ENCODE measurements at regions of chrX and their contacts with region 1.

Region 1: DNA sequence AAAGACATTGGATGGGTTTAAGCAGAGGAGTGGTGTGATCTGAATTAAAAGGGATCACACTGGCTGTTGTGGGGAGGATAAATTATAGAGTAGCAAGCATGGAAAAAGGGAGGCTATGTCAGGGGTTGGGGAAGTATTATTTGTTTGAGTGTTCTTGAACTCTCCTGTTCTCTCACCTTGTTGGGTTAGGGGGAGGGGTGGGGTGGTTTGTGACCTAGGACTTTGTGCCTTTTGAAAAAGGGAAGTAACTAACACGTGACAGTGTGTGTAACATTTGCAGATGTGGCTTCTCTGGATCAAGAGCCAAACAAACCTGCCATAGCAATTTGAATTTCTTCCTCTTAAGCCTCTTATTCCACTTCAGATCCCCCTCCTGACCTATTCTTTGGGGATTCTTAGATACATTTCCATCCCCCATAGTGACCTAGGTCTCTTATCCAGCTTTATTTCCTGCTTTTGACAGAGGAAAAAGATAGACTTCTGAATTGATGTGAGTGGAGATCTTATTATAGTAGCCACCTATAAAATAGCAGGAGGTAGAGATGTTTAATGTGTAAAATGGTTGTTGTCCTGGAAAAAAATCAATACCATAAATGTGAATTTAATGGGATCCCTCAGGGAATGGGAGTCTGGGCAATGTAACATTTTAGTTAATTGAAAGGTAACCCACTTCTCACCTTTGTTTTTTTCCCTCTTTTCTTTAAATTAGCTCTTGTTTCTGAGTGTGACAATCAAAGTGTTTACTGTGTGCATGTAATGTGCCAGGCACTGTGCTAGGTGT is 120.4 kb downstream of the CT47B1 start:
- DNase-seq: no peak
- H3K4me3 ChIP-seq: no peak overlapping the region
- H3K4me1 ChIP-seq: peaks cover 7% of the 10 kb centered on the region
- H3K27me3 ChIP-seq: no peaks in the 10 kb centered on the region

Region 2: GRCh38 chrX:120269373-120270035 is 485.8 kb before region 1 on chrX:
- in situ Hi-C with region 1: no loop called
- DNase-seq: no peak
- H3K4me3 ChIP-seq: no peak overlapping the region
- H3K4me1 ChIP-seq: no peaks in the 10 kb centered on the region
- H3K27me3 ChIP-seq: no peaks in the 10 kb centered on the region

Region 3: GRCh38 chrX:120514236-120514635 is 241.0 kb before region 1 on chrX:
- in situ Hi-C with region 1: loop called (anchors 10 kb)
- DNase-seq: peak; percentile 33 to 42
- H3K4me3 ChIP-seq: no peak overlapping the region
- H3K4me1 ChIP-seq: peaks cover 19% of the 10 kb centered on the region
- H3K27me3 ChIP-seq: no peaks in the 10 kb centered on the region